Endothelial cell of umbilical vein (primary cell): ENCODE measurements at regions of chr1 and their contacts with region 1.

Region 1: DNA sequence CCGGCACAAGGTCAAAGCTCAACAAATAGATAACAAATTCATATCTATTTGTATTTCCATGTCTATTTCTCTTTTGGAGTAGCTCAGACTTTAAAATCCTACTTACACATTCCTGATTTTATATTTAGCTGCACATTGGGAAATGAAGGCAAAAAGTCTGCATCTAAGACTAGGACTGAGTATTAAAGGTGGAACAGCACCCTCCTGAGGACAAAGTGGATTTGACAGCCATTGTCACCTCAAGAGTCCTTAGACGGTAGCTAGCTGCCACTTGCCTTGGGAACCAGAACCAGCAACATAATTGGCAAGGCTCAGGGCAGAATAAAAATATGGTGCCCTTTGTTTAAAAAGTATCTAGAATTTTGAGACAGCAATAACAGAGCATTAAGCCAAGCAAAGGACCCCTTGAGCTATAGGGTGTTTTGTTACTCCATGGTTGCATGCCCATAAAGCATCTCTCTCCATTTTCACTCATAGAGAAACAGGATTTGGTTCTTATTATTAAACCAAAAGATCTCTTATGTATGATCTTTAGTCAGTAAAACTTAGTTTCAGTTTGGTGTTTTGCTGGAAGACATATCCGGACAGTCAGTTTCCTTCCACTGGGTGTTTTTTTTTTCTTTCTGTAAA is 30.0 kb upstream of the SGIP1 start:
- DNase-seq: peak; percentile 88
- H3K4me3 ChIP-seq: no peak overlapping the region
- H3K27ac ChIP-seq: no peak overlapping the region
- H3K4me1 ChIP-seq: peaks cover 5% of the 10 kb centered on the region
- H3K27me3 ChIP-seq: no peaks in the 10 kb centered on the region
- CTCF ChIP-seq: peak; percentile 58 to 76
- POLR2A ChIP-seq: no peak

Region 2: DNA sequence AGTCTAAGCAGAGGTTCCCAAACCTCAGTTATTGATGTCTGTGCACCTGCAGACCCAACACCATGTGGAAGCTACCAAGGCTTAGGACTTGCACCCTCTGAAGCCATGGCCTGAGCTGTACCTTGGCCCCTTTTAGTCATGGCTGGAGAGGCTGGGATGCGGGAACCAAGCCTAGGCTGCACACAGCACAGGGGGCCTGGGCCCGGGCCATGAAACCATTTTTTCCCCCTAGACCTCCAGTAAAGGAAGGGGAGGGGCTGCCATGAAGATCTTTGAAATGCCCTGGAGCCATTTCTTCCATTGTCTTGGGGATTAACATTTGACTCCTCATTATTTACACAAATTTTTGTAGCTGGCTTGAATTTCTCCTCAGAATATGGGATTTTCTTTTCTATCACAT is 445.4 kb before region 1 on chr1:
- CTCF ChIA-PET with region 1: no interaction called
- POLR2A ChIA-PET with region 1: no interaction called
- dilution Hi-C with region 1: no loop called
- intact Hi-C with region 1: no loop called
- DNase-seq: no peak
- H3K4me3 ChIP-seq: no peak overlapping the region
- H3K27ac ChIP-seq: no peak overlapping the region
- H3K4me1 ChIP-seq: no peaks in the 10 kb centered on the region
- H3K27me3 ChIP-seq: peaks cover 0 to 7% of the 10 kb centered on the region in 2 experiments
- CTCF ChIP-seq: no peak
- POLR2A ChIP-seq: no peak

Region 3: GRCh38 chr1:66242646-66243547 is 261.1 kb before region 1 on chr1:
- CTCF ChIA-PET with region 1: interaction called, 17 read pairs
- POLR2A ChIA-PET with region 1: no interaction called
- dilution Hi-C with region 1: no loop called
- intact Hi-C with region 1: loop called (anchors 2 kb)
- DNase-seq: peak; percentile 85
- H3K4me3 ChIP-seq: no peak overlapping the region
- H3K27ac ChIP-seq: peak overlapping the region; percentile 64
- H3K4me1 ChIP-seq: peaks cover 26% of the 10 kb centered on the region
- H3K27me3 ChIP-seq: no peaks in the 10 kb centered on the region
- CTCF ChIP-seq: peak; percentile 98 to 100
- POLR2A ChIP-seq: no peak

Region 4: DNA sequence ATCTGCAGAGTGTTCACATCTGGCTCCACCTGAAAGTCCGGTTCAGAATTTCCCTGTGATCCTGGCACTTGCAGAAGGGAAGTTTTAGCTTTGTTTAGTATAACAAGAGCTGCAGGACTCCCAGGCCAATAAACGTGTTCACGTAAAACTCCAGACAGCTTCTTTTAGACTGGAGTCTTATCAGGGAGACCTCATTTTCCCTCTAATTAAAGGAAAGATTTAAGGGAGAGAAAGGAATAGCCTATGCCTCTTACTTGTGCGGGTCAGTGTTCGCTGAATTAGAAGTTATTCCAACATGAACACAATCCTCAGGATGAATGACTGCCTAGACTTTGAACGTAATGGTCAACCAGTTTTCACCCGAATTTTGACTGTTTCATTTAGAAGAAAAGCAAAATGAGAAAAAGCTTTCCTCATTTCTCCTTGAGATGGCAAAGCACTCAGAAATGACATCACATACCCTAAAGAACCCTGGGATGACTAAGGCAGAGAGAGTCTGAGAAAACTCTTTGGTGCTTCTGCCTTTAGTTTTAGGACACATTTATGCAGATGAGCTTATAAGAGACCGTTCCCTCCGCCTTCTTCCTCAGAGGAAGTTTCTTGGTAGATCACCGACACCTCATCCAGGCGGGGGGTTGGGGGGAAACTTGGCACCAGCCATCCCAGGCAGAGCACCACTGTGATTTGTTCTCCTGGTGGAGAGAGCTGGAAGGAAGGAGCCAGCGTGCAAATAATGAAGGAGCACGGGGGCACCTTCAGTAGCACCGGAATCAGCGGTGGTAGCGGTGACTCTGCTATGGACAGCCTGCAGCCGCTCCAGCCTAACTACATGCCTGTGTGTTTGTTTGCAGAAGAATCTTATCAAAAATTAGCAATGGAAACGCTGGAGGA is 172.1 kb before region 1 on chr1:
- CTCF ChIA-PET with region 1: interaction called, 8 read pairs
- POLR2A ChIA-PET with region 1: no interaction called
- dilution Hi-C with region 1: no loop called
- intact Hi-C with region 1: loop called (anchors 5 kb)
- DNase-seq: peak; percentile 97
- H3K4me3 ChIP-seq: peak overlapping the region; percentile 77 to 98 (median 92)
- H3K27ac ChIP-seq: peak overlapping the region; percentile 95
- H3K4me1 ChIP-seq: peaks cover 30% of the 10 kb centered on the region
- H3K27me3 ChIP-seq: no peaks in the 10 kb centered on the region
- CTCF ChIP-seq: peak; percentile 21 to 57
- POLR2A ChIP-seq: peak; percentile 97

Region 5: DNA sequence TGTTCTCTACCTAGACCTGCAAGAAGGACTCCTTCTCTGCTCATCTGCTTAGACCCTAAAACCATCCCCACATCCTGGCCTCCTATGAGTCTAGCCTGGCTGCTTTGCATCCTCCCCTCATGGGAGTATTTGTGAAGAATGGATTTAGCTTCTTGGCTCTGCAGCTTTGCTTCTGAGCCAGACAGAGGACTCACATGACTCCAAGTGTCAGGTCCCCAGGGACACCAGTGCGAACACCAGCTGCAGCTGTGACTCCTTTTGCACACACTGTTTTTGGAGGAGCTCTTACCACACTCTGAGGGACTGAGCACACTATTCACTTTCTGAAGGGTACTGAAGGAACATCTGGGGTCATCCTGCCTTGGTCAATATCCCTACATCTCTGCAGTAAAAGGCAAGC is 101.8 kb before region 1 on chr1:
- CTCF ChIA-PET with region 1: no interaction called
- POLR2A ChIA-PET with region 1: no interaction called
- dilution Hi-C with region 1: no loop called
- intact Hi-C with region 1: no loop called
- DNase-seq: no peak
- H3K4me3 ChIP-seq: no peak overlapping the region
- H3K27ac ChIP-seq: no peak overlapping the region
- H3K4me1 ChIP-seq: no peaks in the 10 kb centered on the region
- H3K27me3 ChIP-seq: no peaks in the 10 kb centered on the region
- CTCF ChIP-seq: no peak
- POLR2A ChIP-seq: no peak

Region 6: DNA sequence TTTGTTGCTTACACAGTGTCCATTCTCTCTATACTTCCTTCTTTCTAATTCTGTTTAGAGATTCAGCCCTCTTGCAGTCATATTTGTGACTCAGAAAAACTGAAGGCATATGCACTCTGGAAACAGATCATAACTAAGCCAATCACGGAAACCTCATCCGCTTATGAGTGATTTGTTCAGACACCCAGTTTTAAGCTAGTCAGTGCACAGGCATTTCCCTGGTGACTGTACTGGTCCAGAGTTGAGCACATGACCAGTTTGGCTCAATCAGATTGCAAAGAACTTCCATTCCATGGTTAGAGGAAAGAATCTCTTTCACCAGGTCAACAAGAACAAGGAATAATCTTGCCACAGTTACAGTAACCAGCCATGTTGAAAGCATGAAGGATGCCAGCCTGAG is 39.2 kb before region 1 on chr1:
- CTCF ChIA-PET with region 1: interaction called, 24 read pairs
- POLR2A ChIA-PET with region 1: no interaction called
- dilution Hi-C with region 1: no loop called
- intact Hi-C with region 1: no loop called
- DNase-seq: peak; percentile 60
- H3K4me3 ChIP-seq: no peak overlapping the region
- H3K27ac ChIP-seq: peak overlapping the region; percentile 49
- H3K4me1 ChIP-seq: peaks cover 12% of the 10 kb centered on the region
- H3K27me3 ChIP-seq: no peaks in the 10 kb centered on the region
- CTCF ChIP-seq: no peak
- POLR2A ChIP-seq: no peak

Region 7: DNA sequence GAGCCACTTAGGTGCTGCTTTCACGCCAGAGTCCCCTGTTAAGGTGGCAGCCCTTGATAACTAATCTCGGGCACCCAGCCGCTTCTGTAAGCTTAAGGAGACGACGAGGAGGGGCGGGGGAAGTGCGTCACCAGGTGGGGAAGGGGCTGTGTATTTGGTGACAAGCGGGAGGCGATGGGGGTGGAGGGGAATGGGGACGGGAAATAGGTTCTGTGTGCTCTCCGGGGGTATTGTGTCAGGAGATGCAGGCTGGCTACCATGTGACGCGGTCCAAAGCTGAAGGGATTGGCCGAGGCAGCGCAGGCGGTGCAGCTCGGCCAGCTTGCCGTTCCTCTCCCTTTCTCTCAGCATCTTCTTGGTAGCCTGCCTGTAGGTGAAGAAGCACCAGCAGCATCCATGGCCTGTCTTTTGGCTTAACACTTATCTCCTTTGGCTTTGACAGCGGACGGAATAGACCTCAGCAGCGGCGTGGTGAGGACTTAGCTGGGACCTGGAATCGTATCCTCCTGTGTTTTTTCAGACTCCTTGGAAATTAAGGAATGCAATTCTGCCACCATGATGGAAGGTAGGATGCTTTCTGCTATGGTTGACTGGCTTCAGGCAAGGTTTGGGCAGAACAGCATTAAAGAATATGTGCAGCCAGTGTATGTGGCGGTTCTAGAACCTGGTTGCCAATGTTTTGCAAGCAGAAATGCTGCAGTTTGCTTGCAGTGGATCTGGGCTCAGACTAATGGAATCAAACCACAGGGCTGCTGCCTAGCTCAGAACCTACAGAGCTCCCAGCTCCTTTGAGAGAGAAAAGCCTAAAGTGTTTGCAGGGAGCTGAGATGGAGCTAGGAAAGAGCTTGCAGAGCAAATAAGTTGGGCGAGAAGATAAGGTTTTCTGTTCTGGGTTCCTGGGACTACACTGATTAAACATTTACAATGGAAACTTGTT is 30.1 kb after region 1 on chr1 and contains the start of gene SGIP1:
- CTCF ChIA-PET with region 1: interaction called, 19 read pairs
- POLR2A ChIA-PET with region 1: no interaction called
- dilution Hi-C with region 1: no loop called
- intact Hi-C with region 1: no loop called
- DNase-seq: peak; percentile 88
- H3K4me3 ChIP-seq: peak within 1 kb of the TSS; percentile 41 to 66 (median 47)
- H3K27ac ChIP-seq: peak within 1 kb of the TSS; percentile 75
- H3K4me1 ChIP-seq: peaks cover 29% of the 10 kb centered on the region
- H3K27me3 ChIP-seq: no peaks in the 10 kb centered on the region
- CTCF ChIP-seq: no peak
- POLR2A ChIP-seq: no peak
- total RNA-seq, gene SGIP1: 51.0 and 68.9 TPM in 2 replicates

Region 8: DNA sequence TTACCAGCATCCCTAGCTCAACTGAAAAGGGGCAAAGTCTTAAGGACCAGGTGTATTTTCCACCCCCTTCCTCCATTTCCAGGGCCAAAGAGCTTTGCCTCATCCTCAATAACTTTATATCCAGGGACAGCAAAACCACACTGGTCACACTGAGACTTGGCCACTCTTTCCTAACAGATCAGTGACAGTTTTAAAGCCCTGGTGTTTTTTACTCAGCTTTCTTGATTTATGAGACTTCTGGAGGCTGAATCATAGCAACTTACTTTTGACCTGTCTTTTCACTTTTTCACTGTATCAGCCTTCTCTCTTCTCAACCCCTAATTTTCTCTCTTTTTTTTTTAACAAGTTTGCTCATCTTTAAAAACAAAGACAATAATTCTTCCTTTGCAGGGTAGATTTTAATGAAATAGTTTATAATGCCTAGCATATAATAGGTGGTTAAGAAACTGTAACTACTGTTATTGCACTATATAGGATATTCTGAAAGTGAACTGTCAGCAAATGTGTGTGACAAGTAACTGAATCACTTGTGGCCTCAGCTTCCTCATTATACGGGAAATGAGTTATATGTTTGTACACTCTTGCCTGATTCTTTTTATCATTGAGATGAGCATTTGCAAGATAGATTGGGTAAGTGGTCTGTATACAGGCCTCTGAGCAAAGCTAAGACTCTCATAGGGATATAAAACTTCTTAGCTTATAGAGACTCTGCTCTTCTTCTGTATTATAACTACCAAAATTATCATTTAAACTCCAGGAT is 228.6 kb after region 1 on chr1:
- CTCF ChIA-PET with region 1: interaction called, 80 read pairs
- POLR2A ChIA-PET with region 1: no interaction called
- dilution Hi-C with region 1: no loop called
- intact Hi-C with region 1: no loop called
- DNase-seq: peak; percentile 64
- H3K4me3 ChIP-seq: no peak overlapping the region
- H3K27ac ChIP-seq: peak overlapping the region; percentile 64
- H3K4me1 ChIP-seq: peaks cover 37% of the 10 kb centered on the region
- H3K27me3 ChIP-seq: no peaks in the 10 kb centered on the region
- CTCF ChIP-seq: no peak
- POLR2A ChIP-seq: no peak